Activated B cell treated with CpG ODN at 0.5 μM for 24 hours (primary cell): ENCODE measurements at regions of chr1 and their contacts with region 1.

Region 1: DNA sequence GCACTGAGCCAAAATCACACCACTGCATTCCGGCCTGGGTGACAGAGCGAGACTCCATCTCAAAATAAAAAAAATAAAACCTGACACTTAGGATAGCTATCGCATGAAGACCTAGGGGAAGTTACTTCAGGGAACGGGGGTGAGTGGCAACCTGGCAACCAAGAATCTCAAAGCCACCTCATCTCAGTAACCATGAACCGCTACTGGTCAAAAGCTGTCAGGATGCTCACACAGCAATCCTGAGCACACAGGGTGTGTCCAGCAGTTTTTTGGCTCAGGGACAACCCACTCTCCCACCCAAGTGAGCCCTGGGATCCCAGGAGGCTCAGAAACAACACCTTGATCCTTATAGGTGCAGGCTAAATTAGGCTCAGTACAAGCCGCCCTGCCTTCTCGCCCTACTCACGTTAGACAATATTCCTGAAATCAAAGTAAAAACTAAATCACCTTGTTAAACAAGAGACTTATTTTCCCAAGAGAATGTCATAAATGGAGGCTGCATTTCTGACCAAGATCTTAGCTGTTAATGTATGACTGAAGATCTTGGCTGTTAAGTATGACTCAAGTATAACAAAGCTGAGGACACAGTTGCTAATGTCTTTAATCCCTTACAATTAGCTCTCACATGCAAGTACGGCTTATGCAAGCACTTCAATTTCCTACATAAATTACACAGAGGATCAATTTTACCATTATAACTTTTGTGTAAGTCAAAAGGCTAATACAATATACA is 48.3 kb upstream of the NADK start:
- DNase-seq: no peak
- ATAC-seq: no peak
- H3K4me3 Mint-ChIP-seq: no peak overlapping the region
- H3K27ac Mint-ChIP-seq: no peak overlapping the region
- H3K4me1 Mint-ChIP-seq: peaks cover 41% of the 10 kb centered on the region
- H3K27me3 Mint-ChIP-seq: no peaks in the 10 kb centered on the region
- CTCF ChIP-seq: no peak

Region 2: GRCh38 chr1:1858382-1859086 is 32.0 kb after region 1 on chr1:
- CTCF ChIA-PET with region 1: no interaction called
- POLR2A ChIA-PET with region 1: no interaction called
- intact Hi-C with region 1: loop called (anchors 5 kb)
- DNase-seq: no peak
- ATAC-seq: no peak
- H3K4me3 Mint-ChIP-seq: peak overlapping the region; percentile 48
- H3K27ac Mint-ChIP-seq: peak overlapping the region; percentile 66
- H3K4me1 Mint-ChIP-seq: peaks cover 86% of the 10 kb centered on the region
- H3K27me3 Mint-ChIP-seq: no peaks in the 10 kb centered on the region
- CTCF ChIP-seq: no peak

Region 3: DNA sequence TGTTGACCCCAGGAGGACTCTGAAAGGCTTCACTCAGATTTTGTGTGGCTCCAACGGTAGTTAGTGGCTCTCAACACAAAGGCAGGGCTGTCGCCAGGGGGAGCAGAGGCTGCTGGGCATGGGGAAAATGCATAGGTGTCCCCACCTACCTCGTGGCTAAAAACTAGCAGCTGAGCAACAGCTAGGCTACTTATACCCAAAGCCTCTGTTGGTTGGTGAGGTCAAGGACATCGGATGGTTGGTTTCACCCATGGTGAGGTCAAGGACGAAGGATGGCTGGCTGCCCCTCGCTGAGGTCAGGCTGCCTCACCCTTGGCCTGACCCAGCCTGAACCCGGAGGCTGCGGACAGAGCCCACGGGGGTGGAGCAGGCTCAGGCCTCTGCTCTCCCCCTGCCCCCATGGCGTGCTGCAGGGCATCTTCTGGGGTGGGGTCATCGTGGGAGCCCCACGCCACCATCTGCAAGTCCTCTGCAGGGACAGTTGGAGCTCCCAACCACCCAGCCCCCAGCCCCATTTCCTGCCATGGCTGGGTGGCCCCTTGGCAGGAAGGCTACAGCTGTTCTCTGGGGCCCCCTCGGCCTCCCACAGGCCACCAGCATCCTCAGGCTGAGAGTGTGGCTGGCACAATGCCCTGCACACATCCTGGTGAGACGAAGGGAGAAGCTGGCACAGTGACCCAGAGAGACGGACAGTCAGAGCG is 72.9 kb after region 1 on chr1:
- CTCF ChIA-PET with region 1: interaction called, 3 read pairs
- POLR2A ChIA-PET with region 1: interaction called, 12 read pairs
- intact Hi-C with region 1: no loop called
- DNase-seq: no peak
- ATAC-seq: peak; percentile 46
- H3K4me3 Mint-ChIP-seq: peak overlapping the region; percentile 59
- H3K27ac Mint-ChIP-seq: no peak overlapping the region
- H3K4me1 Mint-ChIP-seq: peaks cover 35% of the 10 kb centered on the region
- H3K27me3 Mint-ChIP-seq: no peaks in the 10 kb centered on the region
- CTCF ChIP-seq: no peak